Sigmoid colon (tissue), 7 donors: ENCODE measurements at regions of chr12 and their contacts with region 1.

Region 1: DNA sequence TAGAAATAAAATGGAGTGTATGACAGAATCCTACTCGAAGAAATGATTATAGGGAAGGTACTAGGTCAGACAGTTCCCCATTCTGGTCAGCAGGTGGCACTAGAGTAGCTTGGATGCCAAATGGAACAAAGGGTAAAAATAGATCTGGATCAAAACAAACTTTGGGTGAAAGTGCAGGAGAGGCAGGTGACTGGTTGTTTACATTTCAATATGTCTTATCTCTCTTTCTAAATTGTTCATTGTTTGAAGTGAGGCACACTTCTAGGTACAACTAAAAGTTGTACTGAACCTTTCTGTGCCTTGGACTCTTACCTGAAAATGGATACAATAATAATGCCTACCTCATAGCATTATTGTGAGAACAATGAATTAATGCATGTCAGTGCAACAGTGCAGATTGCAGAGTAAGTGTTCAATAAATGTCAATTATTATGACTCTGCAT is 62.0 kb upstream of the OSBPL8 start:
- DNase-seq: peak; percentile 79
- H3K4me3 ChIP-seq: no peak overlapping the region
- H3K27ac ChIP-seq: no peak overlapping the region
- H3K4me1 ChIP-seq: peaks cover 0 to 10% (median 4%) of the 10 kb centered on the region in 4 donors
- H3K27me3 ChIP-seq: no peaks in the 10 kb centered on the region
- CTCF ChIP-seq: peak; percentile 75 to 96 (median 94)
- EP300 ChIP-seq: no peak
- POLR2A ChIP-seq: no peak

Region 2: GRCh38 chr12:76519538-76519937 is 102.1 kb before region 1 on chr12:
- intact Hi-C with region 1: no loop called
- DNase-seq: no peak
- H3K4me3 ChIP-seq: no peak overlapping the region
- H3K27ac ChIP-seq: no peak overlapping the region
- H3K4me1 ChIP-seq: no peaks in the 10 kb centered on the region
- H3K27me3 ChIP-seq: no peaks in the 10 kb centered on the region
- CTCF ChIP-seq: no peak
- EP300 ChIP-seq: no peak
- POLR2A ChIP-seq: no peak

Region 3: GRCh38 chr12:76586764-76587395 is 34.7 kb before region 1 on chr12:
- intact Hi-C with region 1: no loop called
- DNase-seq: no peak
- H3K4me3 ChIP-seq: no peak overlapping the region
- H3K27ac ChIP-seq: no peak overlapping the region
- H3K4me1 ChIP-seq: no peaks in the 10 kb centered on the region
- H3K27me3 ChIP-seq: no peaks in the 10 kb centered on the region
- CTCF ChIP-seq: peak in 2 of 4 experiments; percentile 36 to 54
- EP300 ChIP-seq: no peak
- POLR2A ChIP-seq: no peak

Region 4: DNA sequence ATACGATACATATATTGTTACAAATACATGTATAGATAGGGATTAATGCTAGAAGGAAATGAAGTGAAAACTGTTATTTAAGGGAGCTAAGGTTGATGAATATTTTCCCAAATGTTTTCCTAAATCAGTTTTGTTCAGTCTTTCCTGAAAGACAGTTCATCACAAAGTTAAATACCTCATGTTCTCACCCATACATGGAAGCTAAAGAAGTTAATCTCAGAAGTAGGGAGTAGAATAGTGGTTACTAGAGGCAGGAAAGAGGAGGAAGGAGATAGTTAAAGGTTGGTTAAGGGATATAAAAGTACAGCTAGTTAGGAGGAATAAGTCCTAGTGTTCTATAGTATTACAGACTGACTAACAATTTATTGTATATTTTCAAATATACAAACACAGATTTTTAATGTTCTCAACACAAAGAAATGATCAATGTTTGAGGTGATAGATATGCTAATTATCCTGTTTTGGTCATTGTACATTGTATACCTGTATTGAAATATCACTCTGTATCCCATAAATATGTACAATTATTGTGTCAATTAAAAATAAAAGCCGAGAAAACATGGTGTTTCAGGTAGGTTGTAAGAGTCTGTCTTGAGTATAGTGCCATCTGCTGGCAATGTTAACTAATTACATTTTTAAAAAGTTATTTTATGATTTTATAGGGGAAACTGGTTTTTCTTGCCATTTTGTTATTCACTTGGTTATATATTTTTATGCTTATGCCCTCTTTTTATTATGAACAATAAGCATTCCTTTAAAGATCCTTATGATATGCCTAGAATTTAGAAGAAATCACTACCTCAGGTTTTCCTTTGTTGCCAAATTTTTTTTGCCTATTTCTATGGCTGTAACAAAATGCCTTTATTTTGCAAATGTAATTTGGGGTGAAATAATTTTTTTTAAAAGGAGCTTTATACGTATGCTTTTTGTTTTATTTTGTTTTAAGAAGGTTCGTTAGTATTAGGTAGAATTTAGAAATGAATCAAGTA is 169.3 kb after region 1 on chr12:
- intact Hi-C with region 1: loop called (anchors 1 kb)
- DNase-seq: no peak
- H3K4me3 ChIP-seq: no peak overlapping the region
- H3K27ac ChIP-seq: peak overlapping the region in 2 of 4 donors; percentile 12 to 22
- H3K4me1 ChIP-seq: peaks cover 0 to 61% (median 33%) of the 10 kb centered on the region in 4 donors
- H3K27me3 ChIP-seq: no peaks in the 10 kb centered on the region
- CTCF ChIP-seq: peak; percentile 41 to 70 (median 56)
- EP300 ChIP-seq: no peak
- POLR2A ChIP-seq: no peak

Region 5: DNA sequence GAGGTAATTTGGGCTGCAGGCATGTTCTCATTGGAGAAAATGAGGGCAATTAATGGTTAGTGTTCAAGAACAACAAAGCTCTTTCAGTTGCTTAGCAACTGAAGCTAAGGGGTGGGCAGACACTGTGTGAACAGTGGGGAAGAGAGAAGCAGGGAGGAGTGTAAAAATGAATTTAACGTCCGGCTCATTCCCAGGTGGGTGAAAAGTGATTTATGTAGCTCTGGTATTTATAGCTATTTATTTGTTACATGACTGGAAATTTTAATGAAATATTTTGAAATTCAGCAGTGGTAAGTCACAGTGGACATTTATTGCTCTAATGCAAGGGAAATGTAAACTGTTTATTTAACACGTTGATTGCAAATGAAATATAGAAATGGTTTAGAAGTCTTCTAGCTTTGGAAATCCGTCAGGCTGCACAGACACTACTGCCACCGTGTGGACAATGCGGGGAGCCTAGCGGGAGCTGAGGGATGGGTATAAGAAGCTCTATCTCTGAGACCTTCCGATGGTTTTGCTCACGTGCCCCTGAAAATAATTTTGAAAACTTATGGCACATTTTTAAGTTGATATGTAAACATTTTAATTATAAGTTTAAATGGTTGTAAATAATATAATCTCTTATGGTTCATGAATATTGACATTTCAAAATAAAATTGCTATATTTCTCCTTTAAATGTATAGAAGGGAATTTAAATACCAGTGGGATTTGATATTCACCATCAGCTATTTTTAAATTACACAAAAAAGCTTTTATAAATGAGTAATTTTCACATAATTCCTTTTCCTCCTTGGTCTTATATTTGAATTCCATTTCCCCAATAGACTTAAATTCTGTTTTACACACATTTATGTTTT is 389.3 kb after region 1 on chr12:
- intact Hi-C with region 1: loop called (anchors 2 kb)
- DNase-seq: peak; percentile 86
- H3K4me3 ChIP-seq: no peak overlapping the region
- H3K27ac ChIP-seq: no peak overlapping the region
- H3K4me1 ChIP-seq: peaks cover 0 to 5% (median 3%) of the 10 kb centered on the region in 4 donors
- H3K27me3 ChIP-seq: no peaks in the 10 kb centered on the region
- CTCF ChIP-seq: peak; percentile 29 to 90 (median 69)
- EP300 ChIP-seq: no peak
- POLR2A ChIP-seq: no peak